CD4-positive, alpha-beta T cell (primary cell): ENCODE measurements at regions of chr11 and their contacts with region 1.

Region 1: DNA sequence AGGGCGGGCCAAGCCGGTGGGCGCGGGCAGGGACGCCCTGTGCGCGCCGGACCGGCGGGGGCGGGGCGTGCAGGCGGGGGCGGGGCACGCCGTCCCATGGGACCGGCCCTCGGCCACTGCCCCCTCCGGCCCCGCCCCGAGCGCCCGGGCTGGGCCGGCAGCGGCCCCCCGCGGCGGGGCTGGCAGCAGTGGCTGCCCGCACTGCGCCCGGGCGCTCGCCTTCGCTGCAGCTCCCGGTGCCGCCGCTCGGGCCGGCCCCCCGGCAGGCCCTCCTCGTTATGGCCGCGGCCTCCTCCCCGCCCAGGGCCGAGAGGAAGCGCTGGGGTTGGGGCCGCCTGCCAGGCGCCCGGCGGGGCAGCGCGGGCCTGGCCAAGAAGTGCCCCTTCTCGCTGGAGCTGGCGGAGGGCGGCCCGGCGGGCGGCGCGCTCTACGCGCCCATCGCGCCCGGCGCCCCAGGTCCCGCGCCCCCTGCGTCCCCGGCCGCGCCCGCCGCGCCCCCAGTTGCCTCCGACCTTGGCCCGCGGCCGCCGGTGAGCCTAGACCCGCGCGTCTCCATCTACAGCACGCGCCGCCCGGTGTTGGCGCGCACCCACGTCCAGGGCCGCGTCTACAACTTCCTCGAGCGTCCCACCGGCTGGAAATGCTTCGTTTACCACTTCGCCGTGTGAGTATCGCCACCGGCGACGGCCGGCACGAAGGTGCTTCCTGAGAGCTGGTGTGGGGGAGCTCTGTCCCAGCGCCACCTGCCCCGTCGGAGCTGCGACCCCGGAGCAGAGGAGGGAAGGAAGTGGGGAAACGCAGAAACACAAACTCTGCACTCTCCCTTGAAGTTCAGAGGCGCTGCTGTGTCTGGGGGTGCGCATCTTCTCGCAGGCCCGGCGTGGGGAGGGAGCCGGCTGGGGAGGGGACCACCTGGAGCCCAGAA is at the start of gene KCNQ1:
- DNase-seq: peak in 7 of 14 experiments; percentile 11 to 80 (median 52)
- ATAC-seq: peak; percentile 22
- H3K4me3 ChIP-seq: peak within 1 kb of the TSS; percentile 75
- H3K4me3 Mint-ChIP-seq: peak within 1 kb of the TSS; percentile 96
- H3K27ac ChIP-seq: peak within 1 kb of the TSS in 1 of 2 donors; percentile 4
- H3K27ac Mint-ChIP-seq: peak within 1 kb of the TSS; percentile 86
- H3K4me1 ChIP-seq: peaks cover 70% of the 10 kb centered on the region
- H3K4me1 Mint-ChIP-seq: peaks cover 50% of the 10 kb centered on the region
- H3K27me3 ChIP-seq: no peaks in the 10 kb centered on the region
- H3K27me3 Mint-ChIP-seq: no peaks in the 10 kb centered on the region
- CTCF ChIP-seq: no peak
- total RNA-seq, gene KCNQ1: 31.3 to 33.1 TPM

Region 2: GRCh38 chr11:2377511-2378443 is 67.3 kb before region 1 on chr11:
- CTCF ChIA-PET with region 1: no interaction called
- POLR2A ChIA-PET with region 1: interaction called, 3 read pairs
- intact Hi-C with region 1: loop called in 1 of 2 experiments (anchors 2 kb)
- DNase-seq: peak; percentile 29 to 80 (median 52)
- ATAC-seq: peak; percentile 53
- H3K4me3 ChIP-seq: peak overlapping the region; percentile 90
- H3K4me3 Mint-ChIP-seq: peak overlapping the region; percentile 82
- H3K27ac ChIP-seq: peak overlapping the region; percentile 67 to 73
- H3K27ac Mint-ChIP-seq: peak overlapping the region; percentile 69
- H3K4me1 ChIP-seq: peaks cover 55% of the 10 kb centered on the region
- H3K4me1 Mint-ChIP-seq: peaks cover 32% of the 10 kb centered on the region
- H3K27me3 ChIP-seq: no peaks in the 10 kb centered on the region
- H3K27me3 Mint-ChIP-seq: no peaks in the 10 kb centered on the region
- CTCF ChIP-seq: no peak

Region 3: GRCh38 chr11:2466869-2467698 is 22.0 kb after region 1 on chr11:
- CTCF ChIA-PET with region 1: no interaction called
- POLR2A ChIA-PET with region 1: interaction called, 36 read pairs
- intact Hi-C with region 1: loop called in 1 of 2 experiments (anchors 2 kb)
- DNase-seq: peak; percentile 26 to 88 (median 55)
- ATAC-seq: peak; percentile 99
- H3K4me3 ChIP-seq: peak overlapping the region; percentile 42
- H3K4me3 Mint-ChIP-seq: peak overlapping the region; percentile 82
- H3K27ac ChIP-seq: no peak overlapping the region
- H3K27ac Mint-ChIP-seq: peak overlapping the region; percentile 82
- H3K4me1 ChIP-seq: peaks cover 69% of the 10 kb centered on the region
- H3K4me1 Mint-ChIP-seq: peaks cover 71% of the 10 kb centered on the region
- H3K27me3 ChIP-seq: no peaks in the 10 kb centered on the region
- H3K27me3 Mint-ChIP-seq: no peaks in the 10 kb centered on the region
- CTCF ChIP-seq: no peak

Region 4: DNA sequence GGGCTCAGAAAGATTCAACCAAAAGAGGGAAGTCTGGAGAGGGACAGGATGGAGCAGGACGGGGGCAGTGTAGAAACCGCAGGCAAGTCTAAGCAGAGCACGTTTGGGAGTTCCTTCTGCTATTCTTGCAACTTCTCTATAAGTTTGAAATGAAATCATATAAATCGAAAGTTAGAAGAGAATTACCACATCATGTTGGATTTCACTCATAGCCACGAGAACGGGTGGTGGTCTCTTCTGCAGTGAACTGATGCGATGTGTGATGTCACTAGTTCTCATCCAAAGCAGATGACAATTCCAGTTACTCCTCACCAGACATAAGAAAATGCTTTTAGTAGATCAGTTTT is 35.8 kb after region 1 on chr11:
- CTCF ChIA-PET with region 1: no interaction called
- POLR2A ChIA-PET with region 1: interaction called, 4 read pairs
- intact Hi-C with region 1: loop called in 1 of 2 experiments (anchors 5 kb)
- DNase-seq: peak in 3 of 14 experiments; percentile 25 to 58 (median 40)
- ATAC-seq: peak; percentile 46
- H3K4me3 ChIP-seq: no peak overlapping the region
- H3K4me3 Mint-ChIP-seq: peak overlapping the region; percentile 40
- H3K27ac ChIP-seq: no peak overlapping the region
- H3K27ac Mint-ChIP-seq: peak overlapping the region; percentile 35
- H3K4me1 ChIP-seq: peaks cover 8% of the 10 kb centered on the region
- H3K4me1 Mint-ChIP-seq: peaks cover 38% of the 10 kb centered on the region
- H3K27me3 ChIP-seq: no peaks in the 10 kb centered on the region
- H3K27me3 Mint-ChIP-seq: no peaks in the 10 kb centered on the region
- CTCF ChIP-seq: no peak

Region 5: DNA sequence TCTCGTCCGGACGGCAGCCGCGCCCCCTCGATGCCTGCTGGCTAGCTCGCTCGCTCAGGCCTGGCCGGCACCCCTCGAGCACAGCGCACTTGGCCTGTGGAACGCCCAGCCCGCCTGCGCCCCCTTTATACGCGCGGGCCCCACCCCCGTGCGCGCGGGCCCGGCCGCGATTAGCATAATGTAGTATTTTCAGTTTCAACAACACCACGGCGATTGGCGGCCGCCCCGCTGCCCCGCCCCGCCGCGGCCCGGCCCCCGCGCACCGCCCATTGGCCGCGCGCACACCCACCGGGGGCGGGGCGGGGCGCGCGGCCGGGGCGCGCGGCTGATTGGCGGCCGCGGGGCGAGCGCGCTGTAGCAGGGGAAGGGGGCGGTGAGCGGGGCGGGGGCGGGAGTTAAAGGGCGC is 440.6 kb after region 1 on chr11 and contains the start of gene CDKN1C:
- CTCF ChIA-PET with region 1: interaction called, 6 read pairs
- POLR2A ChIA-PET with region 1: interaction called, 3 read pairs
- intact Hi-C with region 1: loop called in 1 of 2 experiments (anchors 5 kb)
- DNase-seq: peak; percentile 68 to 95 (median 82)
- ATAC-seq: peak; percentile 87
- H3K4me3 ChIP-seq: peak within 1 kb of the TSS; percentile 84
- H3K4me3 Mint-ChIP-seq: peak within 1 kb of the TSS; percentile 96
- H3K27ac ChIP-seq: no peak within 1 kb of the TSS
- H3K27ac Mint-ChIP-seq: peak within 1 kb of the TSS; percentile 77
- H3K4me1 ChIP-seq: peaks cover 41% of the 10 kb centered on the region
- H3K4me1 Mint-ChIP-seq: peaks cover 19% of the 10 kb centered on the region
- H3K27me3 ChIP-seq: peaks cover 0 to 4% of the 10 kb centered on the region in 2 experiments
- H3K27me3 Mint-ChIP-seq: no peaks in the 10 kb centered on the region
- CTCF ChIP-seq: no peak
- total RNA-seq, gene CDKN1C: 1.9 to 2.5 TPM

Region 6: GRCh38 chr11:3057069-3057963 is 612.2 kb after region 1 on chr11 and contains the start of gene CARS1:
- CTCF ChIA-PET with region 1: no interaction called
- POLR2A ChIA-PET with region 1: no interaction called
- intact Hi-C with region 1: loop called in 1 of 2 experiments (anchors 10 kb)
- DNase-seq: peak; percentile 82 to 97 (median 91)
- ATAC-seq: peak; percentile 99
- H3K4me3 ChIP-seq: peak within 1 kb of the TSS; percentile 83
- H3K4me3 Mint-ChIP-seq: peak within 1 kb of the TSS; percentile 91
- H3K27ac ChIP-seq: peak within 1 kb of the TSS; percentile 63 to 73
- H3K27ac Mint-ChIP-seq: peak within 1 kb of the TSS; percentile 75
- H3K4me1 ChIP-seq: peaks cover 48% of the 10 kb centered on the region
- H3K4me1 Mint-ChIP-seq: peaks cover 37% of the 10 kb centered on the region
- H3K27me3 ChIP-seq: no peaks in the 10 kb centered on the region
- H3K27me3 Mint-ChIP-seq: no peaks in the 10 kb centered on the region
- CTCF ChIP-seq: no peak
- total RNA-seq, gene CARS1: 24.1 to 25.2 TPM